Calu3 (cell line): ENCODE measurements at regions of chr12 and their contacts with region 1.

Region 1: GRCh38 chr12:105705765-105706164 is 375.3 kb downstream of the C12orf75 start:
- DNase-seq: peak; percentile 55
- H3K4me3 Mint-ChIP-seq: no peak overlapping the region
- H3K27ac Mint-ChIP-seq: no peak overlapping the region
- H3K4me1 Mint-ChIP-seq: no peaks in the 10 kb centered on the region
- H3K27me3 Mint-ChIP-seq: peaks cover 20% of the 10 kb centered on the region
- CTCF ChIP-seq: peak; percentile 71

Region 2: GRCh38 chr12:105775343-105775742 is 69.6 kb after region 1 on chr12:
- CTCF ChIA-PET with region 1: no interaction called
- intact Hi-C with region 1: no loop called
- DNase-seq: no peak
- H3K4me3 Mint-ChIP-seq: no peak overlapping the region
- H3K27ac Mint-ChIP-seq: no peak overlapping the region
- H3K4me1 Mint-ChIP-seq: no peaks in the 10 kb centered on the region
- H3K27me3 Mint-ChIP-seq: peaks cover 16% of the 10 kb centered on the region
- CTCF ChIP-seq: no peak

Region 3: GRCh38 chr12:106078358-106079010 is 372.7 kb after region 1 on chr12:
- CTCF ChIA-PET with region 1: no interaction called
- intact Hi-C with region 1: loop called (anchors 5 kb)
- DNase-seq: no peak
- H3K4me3 Mint-ChIP-seq: no peak overlapping the region
- H3K27ac Mint-ChIP-seq: no peak overlapping the region
- H3K4me1 Mint-ChIP-seq: no peaks in the 10 kb centered on the region
- H3K27me3 Mint-ChIP-seq: no peaks in the 10 kb centered on the region
- CTCF ChIP-seq: no peak